OCI-LY7 (cell line): ENCODE measurements at regions of chr2 and their contacts with region 1.

Region 1: GRCh38 chr2:134275058-134275862 is 21.4 kb downstream of the MGAT5 start:
- DNase-seq: peak; percentile 96
- H3K4me3 ChIP-seq: peak overlapping the region; percentile 60
- H3K27ac ChIP-seq: peak overlapping the region; percentile 94
- H3K4me1 ChIP-seq: peaks cover 95% of the 10 kb centered on the region
- CTCF ChIP-seq: no peak

Region 2: DNA sequence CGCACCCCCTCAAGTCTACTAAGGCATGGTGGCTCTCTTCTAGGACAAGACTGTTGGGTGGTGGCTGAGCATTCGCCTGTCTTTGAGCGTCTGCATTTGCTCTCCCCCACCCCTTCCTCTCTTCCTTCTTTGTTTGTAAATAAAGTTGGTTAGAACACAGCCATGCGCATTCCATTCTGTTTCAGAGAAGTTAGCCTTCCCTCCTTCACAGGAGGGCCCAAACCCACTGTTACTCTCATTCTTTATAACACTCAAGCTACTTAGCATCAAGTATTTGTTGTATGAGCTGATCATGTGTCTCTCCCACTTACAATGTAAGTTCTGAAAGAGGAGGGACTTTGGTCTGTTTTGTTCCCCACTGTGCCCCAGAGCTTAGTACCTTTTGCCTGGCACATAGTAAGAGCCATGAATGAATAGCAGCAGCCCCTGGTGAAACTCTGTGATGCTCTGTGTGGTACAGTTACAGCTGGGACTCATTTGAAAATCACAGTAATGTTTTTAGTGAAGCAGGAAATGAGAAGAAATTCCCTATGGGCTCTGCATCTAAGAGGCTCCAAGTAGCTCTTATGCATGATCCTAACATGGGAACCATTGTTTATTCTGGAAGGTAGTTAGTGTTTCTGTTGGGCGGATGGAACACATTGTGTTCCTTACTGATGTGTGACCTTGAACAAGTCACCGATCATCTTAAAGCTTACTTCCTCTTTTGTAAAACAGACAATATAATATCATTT is 13.7 kb before region 1 on chr2:
- CTCF ChIA-PET with region 1: interaction called, 5 read pairs
- POLR2A ChIA-PET with region 1: interaction called, 115 read pairs
- intact Hi-C with region 1: no loop called
- DNase-seq: peak; percentile 75
- H3K4me3 ChIP-seq: peak overlapping the region; percentile 40
- H3K27ac ChIP-seq: peak overlapping the region; percentile 91
- H3K4me1 ChIP-seq: peaks cover 86% of the 10 kb centered on the region
- CTCF ChIP-seq: no peak

Region 3: DNA sequence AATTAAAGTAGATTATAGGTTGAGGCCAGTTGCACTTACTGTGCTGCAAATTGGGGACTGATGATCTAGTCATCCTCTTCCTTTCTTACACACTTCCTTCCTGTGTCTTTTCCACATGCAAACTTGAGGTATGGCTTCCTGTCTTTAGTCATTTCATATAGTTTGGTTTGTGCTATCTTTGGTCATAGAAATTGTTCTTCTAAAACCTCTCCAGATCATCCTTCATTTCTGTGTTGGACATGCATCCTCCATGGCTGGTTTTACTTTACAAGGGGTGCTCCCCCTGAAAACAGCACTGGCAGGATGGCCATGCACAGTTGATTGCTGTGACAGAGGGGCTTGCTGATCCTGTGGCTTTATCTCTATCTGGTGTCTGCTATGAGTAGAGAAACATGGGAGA is 15.1 kb after region 1 on chr2:
- CTCF ChIA-PET with region 1: interaction called, 3 read pairs
- POLR2A ChIA-PET with region 1: interaction called, 21 read pairs
- intact Hi-C with region 1: loop called (anchors 1 kb)
- DNase-seq: peak; percentile 59
- H3K4me3 ChIP-seq: peak overlapping the region; percentile 44
- H3K27ac ChIP-seq: peak overlapping the region; percentile 50
- H3K4me1 ChIP-seq: peaks cover 94% of the 10 kb centered on the region
- CTCF ChIP-seq: no peak